PC-9 (cell line): ENCODE measurements at regions of chr12 and their contacts with region 1.

Region 1: DNA sequence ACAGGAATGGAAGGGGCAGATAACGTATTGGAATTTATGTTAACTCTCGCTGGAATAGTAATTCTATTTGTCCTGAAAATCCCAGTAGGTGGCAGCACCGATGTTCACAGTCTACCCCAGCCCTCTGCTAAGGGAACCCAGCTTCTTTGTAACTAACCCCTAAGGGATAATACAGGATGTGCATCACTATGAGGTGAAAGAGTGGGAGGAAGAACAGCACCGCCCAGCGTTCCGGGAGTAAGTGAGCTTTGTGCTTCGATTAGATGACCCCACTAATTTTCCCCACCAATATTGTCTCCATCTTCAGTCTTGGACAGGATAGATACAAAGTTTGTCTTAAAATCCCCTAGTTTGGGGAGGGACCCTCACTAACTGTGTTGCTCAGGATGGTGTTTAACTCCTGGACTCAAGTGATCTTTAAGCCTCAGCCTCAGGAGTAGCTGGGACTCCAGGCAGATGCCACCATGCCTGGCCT is 2.7 kb downstream of the SLC2A3 start:
- DNase-seq: peak; percentile 79 to 90
- H3K4me3 ChIP-seq: peak overlapping the region; percentile 59
- H3K27ac ChIP-seq: peak overlapping the region; percentile 33; the same call in 1 of the 2 replicates
- H3K4me1 ChIP-seq: peaks cover 44% of the 10 kb centered on the region
- H3K27me3 ChIP-seq: no peaks in the 10 kb centered on the region
- CTCF ChIP-seq: peak; percentile 85

Region 2: DNA sequence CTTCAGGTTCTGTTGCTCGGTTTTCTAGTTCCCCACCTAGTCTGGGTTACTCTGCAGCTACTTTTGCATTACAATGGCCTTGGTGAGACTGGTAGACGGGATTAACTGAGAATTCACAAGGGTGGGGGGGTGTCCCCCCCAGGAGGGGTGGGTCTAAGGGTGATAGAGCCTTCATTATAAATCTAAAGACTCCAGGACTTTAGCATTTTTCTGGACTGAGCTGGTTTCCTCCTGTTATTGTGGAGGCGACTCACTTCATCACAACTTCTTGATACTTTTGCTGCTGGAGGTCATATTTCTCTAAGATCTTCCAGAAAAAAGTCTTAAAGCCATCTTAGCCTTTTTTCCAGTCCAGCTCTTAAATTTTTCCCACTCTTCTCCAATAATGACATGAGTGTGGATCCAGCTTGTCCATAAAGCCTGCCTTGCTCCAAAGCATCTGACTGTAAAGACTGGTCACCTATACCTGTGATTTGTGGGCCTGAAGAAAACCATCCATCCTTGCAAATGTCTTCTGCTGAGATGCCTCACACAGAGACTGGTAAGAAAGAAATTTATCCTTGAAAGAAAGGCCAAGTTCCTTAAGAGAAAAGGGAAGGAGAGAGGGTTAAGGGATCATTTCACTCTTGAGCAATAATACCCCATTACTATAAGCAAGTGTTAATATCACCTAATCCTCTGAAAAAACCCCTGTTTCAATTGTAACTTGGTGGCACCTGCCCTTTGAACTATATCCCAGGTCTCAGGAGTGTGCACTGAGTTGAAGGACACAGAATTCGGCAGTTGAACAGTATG is 40.9 kb before region 1 on chr12:
- CTCF ChIA-PET with region 1: interaction called, 4 read pairs
- POLR2A ChIA-PET with region 1: interaction called, 13 read pairs
- intact Hi-C with region 1: loop called (anchors 5 kb)
- DNase-seq: no peak
- H3K4me3 ChIP-seq: no peak overlapping the region
- H3K27ac ChIP-seq: no peak overlapping the region
- H3K4me1 ChIP-seq: peaks cover 21% of the 10 kb centered on the region
- H3K27me3 ChIP-seq: no peaks in the 10 kb centered on the region
- CTCF ChIP-seq: no peak

Region 3: GRCh38 chr12:7907009-7907408 is 26.3 kb before region 1 on chr12:
- CTCF ChIA-PET with region 1: interaction called, 11 read pairs
- POLR2A ChIA-PET with region 1: interaction called, 16 read pairs
- intact Hi-C with region 1: loop called (anchors 1 kb)
- DNase-seq: peak; percentile 81 to 92
- H3K4me3 ChIP-seq: no peak overlapping the region
- H3K27ac ChIP-seq: 0 out of 2 replicates have a peak overlapping the region, but pooled peaks have one; percentile 23
- H3K4me1 ChIP-seq: peaks cover 23% of the 10 kb centered on the region
- H3K27me3 ChIP-seq: no peaks in the 10 kb centered on the region
- CTCF ChIP-seq: peak; percentile 69

Region 4: DNA sequence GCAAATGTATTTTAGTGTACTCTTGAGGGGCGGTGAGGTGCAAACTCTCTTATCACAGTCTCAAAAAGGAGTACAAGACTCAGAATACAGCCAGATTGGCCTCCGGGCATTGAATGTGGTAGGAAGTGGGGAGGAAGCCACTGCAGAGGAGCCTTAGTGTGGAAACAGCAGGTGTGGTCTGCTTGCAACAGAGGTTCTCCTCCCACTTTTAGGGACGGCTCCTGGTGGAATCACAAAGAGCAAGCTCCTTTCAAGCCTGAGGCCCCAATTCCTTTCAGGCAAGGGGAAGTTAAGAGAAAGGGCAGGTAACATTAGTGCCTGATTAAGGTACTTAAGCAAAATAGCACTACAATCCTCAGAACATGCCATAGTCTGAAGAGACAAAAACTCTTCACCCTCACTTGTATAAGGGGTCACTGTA is 26.4 kb after region 1 on chr12:
- CTCF ChIA-PET with region 1: interaction called, 28 read pairs
- POLR2A ChIA-PET with region 1: interaction called, 44 read pairs
- intact Hi-C with region 1: loop called (anchors 1 kb)
- DNase-seq: peak; percentile 81 to 96
- H3K4me3 ChIP-seq: peak overlapping the region; percentile 63; the same call in 1 of the 2 replicates
- H3K27ac ChIP-seq: peak overlapping the region; percentile 75
- H3K4me1 ChIP-seq: peaks cover 35% of the 10 kb centered on the region
- H3K27me3 ChIP-seq: no peaks in the 10 kb centered on the region
- CTCF ChIP-seq: no peak